ENCODE measurements at regions of chr2 and their contacts with region 1.

Region 1: GRCh38 chr2:1550658-1551316 is 137.5 kb downstream of the TPO start:
- DNase-seq: peak; percentile 18
- ATAC-seq: peak; percentile 94
- H3K4me3 ChIP-seq: no peak overlapping the region
- H3K27ac ChIP-seq: no peak overlapping the region
- H3K4me1 ChIP-seq: peaks cover 0 to 7% of the 10 kb centered on the region in 2 experiments; a peak in 2 of 4 replicates
- H3K27me3 ChIP-seq: no peaks in the 10 kb centered on the region
- CTCF ChIP-seq: peak; percentile 59 to 96 (median 83)
- POLR2A ChIP-seq: no peak
- RAD21 ChIP-seq: peak; percentile 62

Region 2: DNA sequence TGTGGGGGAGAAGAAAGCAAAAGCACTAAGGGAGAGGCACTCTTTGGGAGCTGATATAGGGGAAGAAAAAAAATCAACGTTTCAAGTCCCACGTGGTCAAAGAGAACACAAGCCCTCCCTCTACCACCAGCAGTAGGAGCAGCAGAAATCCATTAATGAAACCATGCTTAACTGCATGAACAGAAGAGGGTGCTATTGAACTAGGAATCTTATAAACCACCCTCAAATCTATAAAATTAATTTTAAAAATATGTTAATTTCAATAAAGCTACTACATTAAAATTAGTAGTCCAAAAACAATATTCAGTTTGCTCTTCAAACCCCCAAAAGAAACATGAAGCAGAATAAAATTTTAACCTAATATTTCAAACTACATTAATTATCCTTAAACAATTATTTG is 1021.4 kb before region 1 on chr2:
- CTCF ChIA-PET with region 1: interaction called, 4 read pairs
- POLR2A ChIA-PET with region 1: no interaction called
- RAD21 ChIA-PET with region 1: no interaction called
- intact Hi-C with region 1: loop called (anchors 1 kb)
- DNase-seq: peak; percentile 74
- ATAC-seq: peak; percentile 98
- H3K4me3 ChIP-seq: no peak overlapping the region
- H3K27ac ChIP-seq: no peak overlapping the region
- H3K4me1 ChIP-seq: 0 out of 4 replicates have a peak, but pooled peaks cover 2 to 4% of the 10 kb centered on the region in 2 experiments
- H3K27me3 ChIP-seq: no peaks in the 10 kb centered on the region
- CTCF ChIP-seq: peak; percentile 49 to 92 (median 54)
- POLR2A ChIP-seq: no peak
- RAD21 ChIP-seq: peak; percentile 86

Region 3: DNA sequence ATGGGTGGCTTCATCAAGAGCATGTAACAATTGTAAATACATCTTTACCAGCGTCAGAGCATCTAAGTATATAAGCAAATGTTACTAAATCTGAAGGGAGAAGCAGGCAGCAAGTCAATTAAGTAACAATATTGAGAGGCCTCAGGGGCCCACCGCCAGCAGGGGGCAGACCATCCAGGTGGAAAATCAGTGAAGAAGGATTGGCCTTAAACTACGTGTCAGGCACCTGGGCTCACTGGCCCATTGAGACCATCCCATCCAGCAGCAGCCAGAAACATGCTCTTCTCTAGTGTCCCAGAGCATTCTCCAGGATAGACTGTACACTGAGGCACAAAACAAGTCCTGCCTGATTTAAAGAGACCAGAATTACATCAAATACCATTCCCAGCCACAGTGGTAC is 696.3 kb before region 1 on chr2:
- CTCF ChIA-PET with region 1: no interaction called
- POLR2A ChIA-PET with region 1: no interaction called
- RAD21 ChIA-PET with region 1: no interaction called
- intact Hi-C with region 1: loop called (anchors 2 kb)
- DNase-seq: peak; percentile 36
- ATAC-seq: peak; percentile 87
- H3K4me3 ChIP-seq: no peak overlapping the region
- H3K27ac ChIP-seq: no peak overlapping the region
- H3K4me1 ChIP-seq: no peaks in the 10 kb centered on the region
- H3K27me3 ChIP-seq: no peaks in the 10 kb centered on the region
- CTCF ChIP-seq: peak; percentile 54 to 79 (median 77); a peak in 5 of 6 replicates
- POLR2A ChIP-seq: no peak
- RAD21 ChIP-seq: peak; percentile 55

Region 4: GRCh38 chr2:1140389-1141003 is 410.3 kb before region 1 on chr2:
- CTCF ChIA-PET with region 1: no interaction called
- POLR2A ChIA-PET with region 1: no interaction called
- RAD21 ChIA-PET with region 1: no interaction called
- intact Hi-C with region 1: loop called (anchors 5 kb)
- DNase-seq: no peak
- ATAC-seq: peak; percentile 99
- H3K4me3 ChIP-seq: no peak overlapping the region
- H3K27ac ChIP-seq: no peak overlapping the region
- H3K4me1 ChIP-seq: no peaks in the 10 kb centered on the region
- H3K27me3 ChIP-seq: peaks cover 3% of the 10 kb centered on the region; the same call in 1 of the 2 replicates
- CTCF ChIP-seq: peak; percentile 44 to 100 (median 93); a peak in 5 of 6 replicates
- POLR2A ChIP-seq: no peak
- RAD21 ChIP-seq: peak; percentile 38; the same call in 1 of the 2 replicates

Region 5: DNA sequence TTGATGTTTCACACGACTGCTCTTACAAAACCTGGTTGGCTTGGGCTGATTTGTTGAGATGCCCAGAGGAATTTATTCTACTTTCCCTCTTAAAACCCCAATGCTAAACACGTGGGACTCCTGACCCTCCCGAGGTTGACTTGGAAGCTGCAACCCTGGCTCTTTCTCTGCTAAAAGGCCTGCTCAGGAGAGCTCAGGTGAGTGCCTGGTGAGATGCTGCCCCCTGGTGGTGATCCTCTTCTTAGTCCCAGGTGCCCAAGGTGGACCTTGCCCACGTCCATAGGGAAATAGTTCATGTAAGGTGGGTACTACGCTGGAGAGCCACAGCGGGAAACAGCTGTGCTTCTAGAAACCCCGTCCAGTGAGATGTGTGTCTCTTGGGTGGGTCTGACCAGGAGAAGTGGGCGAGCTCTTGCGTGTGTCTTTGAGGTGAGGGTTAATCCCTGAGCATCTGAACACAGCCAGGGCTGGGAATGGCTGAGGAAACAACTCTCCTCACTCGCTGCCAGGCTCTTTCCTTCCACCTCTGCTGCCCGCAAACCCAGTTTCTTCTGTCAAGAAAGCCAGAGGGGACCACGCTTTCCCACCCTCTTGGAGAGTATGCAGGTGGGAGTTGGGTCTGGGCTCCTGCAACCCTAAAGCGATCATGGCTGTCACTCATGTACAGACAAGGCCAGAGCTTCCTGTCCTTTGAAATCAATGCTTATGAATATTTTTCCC is 219.1 kb after region 1 on chr2:
- CTCF ChIA-PET with region 1: interaction called, 17 read pairs
- POLR2A ChIA-PET with region 1: no interaction called
- RAD21 ChIA-PET with region 1: interaction called in 1 of 2 experiments, 3 read pairs
- intact Hi-C with region 1: loop called (anchors 2 kb)
- DNase-seq: peak; percentile 71
- ATAC-seq: peak; percentile 99
- H3K4me3 ChIP-seq: no peak overlapping the region
- H3K27ac ChIP-seq: no peak overlapping the region
- H3K4me1 ChIP-seq: no peaks in the 10 kb centered on the region
- H3K27me3 ChIP-seq: 0 out of 2 replicates have a peak, but pooled peaks cover 6% of the 10 kb centered on the region
- CTCF ChIP-seq: peak; percentile 87 to 92 (median 89)
- POLR2A ChIP-seq: no peak
- RAD21 ChIP-seq: peak; percentile 90

Region 6: DNA sequence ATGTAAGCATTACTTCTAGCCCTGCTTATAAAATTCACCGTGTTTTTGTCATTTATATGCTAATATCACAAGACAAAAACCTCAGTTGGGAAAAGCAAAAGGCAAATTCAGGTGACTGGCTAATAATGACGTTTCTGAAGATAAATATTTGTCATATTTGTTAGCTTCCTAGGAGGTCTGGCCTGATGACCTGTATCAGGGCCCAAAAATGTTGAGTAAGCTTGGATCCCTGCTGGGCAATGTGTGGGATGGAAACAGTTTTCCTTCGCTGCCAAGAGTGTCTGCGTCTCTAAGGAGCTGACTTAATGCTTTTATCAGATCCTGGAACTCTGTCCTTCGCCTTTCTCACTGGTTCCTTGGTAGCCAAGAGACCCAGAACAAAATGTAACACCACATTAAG is 423.6 kb after region 1 on chr2:
- CTCF ChIA-PET with region 1: no interaction called
- POLR2A ChIA-PET with region 1: no interaction called
- RAD21 ChIA-PET with region 1: no interaction called
- intact Hi-C with region 1: no loop called
- DNase-seq: no peak
- ATAC-seq: no peak
- H3K4me3 ChIP-seq: no peak overlapping the region
- H3K27ac ChIP-seq: no peak overlapping the region
- H3K4me1 ChIP-seq: no peaks in the 10 kb centered on the region
- H3K27me3 ChIP-seq: no peaks in the 10 kb centered on the region; the same call in 1 of the 2 replicates
- CTCF ChIP-seq: no peak
- POLR2A ChIP-seq: no peak
- RAD21 ChIP-seq: no peak

Measured in HCT116 (cell line).